PC-9 (cell line): ENCODE measurements at regions of chr5 and their contacts with region 1.

Region 1: DNA sequence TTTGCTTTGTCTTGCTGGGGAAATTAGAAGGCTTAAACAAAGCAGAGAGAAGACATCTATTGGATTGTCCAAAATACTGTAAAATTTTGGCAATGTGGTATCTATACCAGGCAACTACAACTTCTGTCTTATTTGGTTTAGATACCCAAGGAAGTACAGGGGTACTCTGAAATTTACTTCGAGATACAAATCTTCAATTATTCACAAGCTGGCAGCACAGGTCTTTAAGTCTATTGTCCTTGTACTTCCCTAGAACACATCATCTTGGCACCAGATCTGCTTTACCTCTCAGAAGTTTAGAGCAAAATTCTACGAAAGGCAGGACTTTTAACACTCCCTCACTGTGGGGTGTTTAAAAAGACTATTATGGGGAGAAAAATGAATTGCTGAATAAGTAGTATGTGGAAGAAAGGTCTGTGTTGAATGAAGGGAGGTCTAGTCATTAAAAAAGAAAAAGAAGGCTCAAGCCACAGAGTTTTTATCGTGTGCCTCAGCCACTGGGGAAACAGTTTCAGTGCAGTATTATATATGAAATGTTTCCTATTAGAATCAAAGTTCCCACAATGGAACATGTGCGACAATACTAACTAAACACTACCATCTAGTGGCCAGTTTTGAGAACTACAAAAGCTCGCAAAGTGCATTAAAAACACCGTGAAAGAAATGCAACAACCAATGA is 93.7 kb downstream of the PDE4D start:
- DNase-seq: peak; percentile 28 to 58
- H3K4me3 ChIP-seq: peak overlapping the region; percentile 49; the same call in 1 of the 2 replicates
- H3K27ac ChIP-seq: peak overlapping the region; percentile 94
- H3K4me1 ChIP-seq: peaks cover 32% of the 10 kb centered on the region
- H3K27me3 ChIP-seq: no peaks in the 10 kb centered on the region
- CTCF ChIP-seq: peak; percentile 86

Region 2: DNA sequence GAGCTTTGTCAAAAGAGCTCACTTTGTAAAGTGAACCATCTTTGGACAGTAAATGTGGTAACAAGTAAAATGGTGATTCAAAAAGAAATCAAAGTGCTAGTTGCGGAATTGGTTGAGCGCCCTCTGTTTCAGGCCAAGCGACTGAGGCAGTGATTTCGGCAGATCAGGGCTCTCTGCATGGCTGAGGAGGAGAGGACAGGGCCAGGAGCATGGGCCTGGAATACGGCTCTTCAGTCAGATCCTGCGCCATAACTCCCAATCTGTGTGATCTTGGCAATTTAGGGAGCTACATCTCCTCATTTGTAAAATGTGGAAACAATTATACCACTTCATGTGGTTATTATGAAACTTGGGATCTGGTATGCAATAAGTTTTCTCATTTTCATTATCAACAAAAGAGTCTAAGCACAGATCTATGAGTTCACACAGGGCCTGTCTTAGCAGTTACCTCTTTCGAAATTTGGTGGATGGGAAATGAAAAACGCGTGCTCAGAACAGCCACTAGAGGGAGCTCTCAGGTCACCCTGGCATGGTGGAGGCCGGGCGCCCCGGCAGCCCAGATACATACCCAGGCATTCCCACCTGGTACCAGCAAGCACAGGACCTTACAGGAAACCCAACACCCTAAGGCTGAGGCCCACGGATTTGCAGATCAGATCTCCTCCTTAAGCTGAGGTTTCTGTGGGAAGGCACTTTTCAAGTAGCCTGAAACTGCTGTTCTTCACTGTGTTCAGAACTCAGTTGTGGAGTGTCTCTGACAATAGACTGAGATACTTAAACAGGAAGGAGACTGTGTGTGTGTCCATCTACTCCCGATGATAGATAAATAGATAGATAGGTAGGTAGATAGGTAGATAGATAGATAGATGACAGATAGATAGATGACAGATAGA is 913.2 kb before region 1 on chr5:
- CTCF ChIA-PET with region 1: no interaction called
- POLR2A ChIA-PET with region 1: no interaction called
- intact Hi-C with region 1: loop called (anchors 1 kb)
- DNase-seq: peak; percentile 40 to 56
- H3K4me3 ChIP-seq: no peak overlapping the region
- H3K27ac ChIP-seq: no peak overlapping the region
- H3K4me1 ChIP-seq: peaks cover 7% of the 10 kb centered on the region
- H3K27me3 ChIP-seq: no peaks in the 10 kb centered on the region
- CTCF ChIP-seq: peak; percentile 93

Region 3: GRCh38 chr5:59193616-59194319 is 606.0 kb before region 1 on chr5:
- CTCF ChIA-PET with region 1: interaction called, 3 read pairs
- POLR2A ChIA-PET with region 1: no interaction called
- intact Hi-C with region 1: loop called (anchors 2 kb)
- DNase-seq: peak; percentile 83 to 90
- H3K4me3 ChIP-seq: no peak overlapping the region
- H3K27ac ChIP-seq: peak overlapping the region; percentile 72
- H3K4me1 ChIP-seq: peaks cover 12% of the 10 kb centered on the region
- H3K27me3 ChIP-seq: no peaks in the 10 kb centered on the region
- CTCF ChIP-seq: no peak

Region 4: DNA sequence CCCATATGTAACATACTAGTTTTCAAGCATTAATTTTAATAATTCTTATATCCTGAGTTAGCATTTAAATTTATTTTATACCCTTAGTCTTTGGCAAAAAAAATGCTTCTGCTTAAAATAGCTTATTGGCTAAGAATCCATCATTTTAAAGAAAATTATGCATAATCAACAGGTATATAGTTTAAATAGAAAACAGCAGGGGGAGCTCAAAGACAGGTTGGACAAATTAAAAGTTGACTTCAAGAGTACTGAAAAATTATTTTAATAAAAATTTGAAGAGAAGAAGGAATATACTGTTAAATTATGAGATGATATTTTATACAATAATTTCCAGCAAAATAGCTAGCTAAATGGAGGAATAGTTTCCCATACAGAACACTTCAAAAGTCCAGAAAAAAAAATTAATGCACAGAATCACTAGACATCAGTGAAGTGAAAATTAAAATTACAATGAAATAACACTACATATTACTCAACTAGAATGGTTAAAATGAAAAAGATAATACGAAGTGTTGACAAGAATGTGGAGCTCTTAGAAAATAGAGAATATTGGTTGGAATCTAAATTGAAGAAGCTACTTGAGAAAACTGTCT is 293.4 kb before region 1 on chr5:
- CTCF ChIA-PET with region 1: interaction called, 5 read pairs
- POLR2A ChIA-PET with region 1: no interaction called
- intact Hi-C with region 1: loop called (anchors 1 kb)
- DNase-seq: no peak
- H3K4me3 ChIP-seq: no peak overlapping the region
- H3K27ac ChIP-seq: no peak overlapping the region
- H3K4me1 ChIP-seq: no peaks in the 10 kb centered on the region
- H3K27me3 ChIP-seq: no peaks in the 10 kb centered on the region
- CTCF ChIP-seq: peak; percentile 82

Region 5: GRCh38 chr5:59673438-59674058 is 126.3 kb before region 1 on chr5:
- CTCF ChIA-PET with region 1: interaction called, 4 read pairs
- POLR2A ChIA-PET with region 1: no interaction called
- intact Hi-C with region 1: loop called (anchors 1 kb)
- DNase-seq: peak in 1 of 2 experiments; percentile 61
- H3K4me3 ChIP-seq: no peak overlapping the region
- H3K27ac ChIP-seq: no peak overlapping the region
- H3K4me1 ChIP-seq: 0 out of 2 replicates have a peak, but pooled peaks cover 6% of the 10 kb centered on the region
- H3K27me3 ChIP-seq: no peaks in the 10 kb centered on the region
- CTCF ChIP-seq: peak; percentile 94

Region 6: GRCh38 chr5:59745422-59745863 is 54.4 kb before region 1 on chr5:
- CTCF ChIA-PET with region 1: no interaction called
- POLR2A ChIA-PET with region 1: no interaction called
- intact Hi-C with region 1: loop called (anchors 10 kb)
- DNase-seq: peak in 1 of 2 experiments; percentile 43
- H3K4me3 ChIP-seq: no peak overlapping the region
- H3K27ac ChIP-seq: peak overlapping the region; percentile 41; the same call in 1 of the 2 replicates
- H3K4me1 ChIP-seq: peaks cover 36% of the 10 kb centered on the region
- H3K27me3 ChIP-seq: no peaks in the 10 kb centered on the region
- CTCF ChIP-seq: no peak